Mammary epithelial cell (primary cell): ENCODE measurements at regions of chr16 and their contacts with region 1.

Region 1: DNA sequence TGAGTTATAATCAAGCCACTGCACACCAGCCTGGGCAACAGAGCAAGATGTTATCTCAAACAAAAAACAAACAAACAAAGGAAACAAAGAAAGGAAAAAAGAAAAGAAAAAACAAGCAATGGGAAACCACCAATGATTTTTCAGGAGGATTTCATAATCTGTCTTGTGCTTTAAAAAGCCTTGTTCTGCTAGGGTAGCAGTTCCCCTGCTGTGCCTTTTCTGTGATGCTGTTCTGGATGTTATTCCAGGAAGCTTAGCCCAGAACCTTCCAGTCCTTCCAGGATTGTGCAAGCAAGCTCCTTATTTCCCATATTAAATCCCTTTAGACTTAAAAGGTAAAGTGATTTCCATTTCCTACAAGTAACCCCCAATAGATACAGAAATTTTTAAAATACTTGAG is 171.1 kb downstream of the ABCC12 start:
- DNase-seq: no peak
- H3K4me3 ChIP-seq: no peak overlapping the region
- H3K27ac ChIP-seq: no peak overlapping the region
- H3K4me1 ChIP-seq: no peaks in the 10 kb centered on the region
- H3K27me3 ChIP-seq: no peaks in the 10 kb centered on the region
- CTCF ChIP-seq: no peak

Region 2: GRCh38 chr16:48064971-48065370 is 80.3 kb after region 1 on chr16:
- CTCF ChIA-PET with region 1: no interaction called
- dilution Hi-C with region 1: loop called (anchors 5 kb)
- in situ Hi-C with region 1: no loop called
- intact Hi-C with region 1: no loop called
- DNase-seq: peak; percentile 35
- H3K4me3 ChIP-seq: no peak overlapping the region
- H3K27ac ChIP-seq: no peak overlapping the region
- H3K4me1 ChIP-seq: no peaks in the 10 kb centered on the region
- H3K27me3 ChIP-seq: peaks cover 3% of the 10 kb centered on the region
- CTCF ChIP-seq: no peak